Activated CD4-positive, alpha-beta T cell treated with anti-CD3 and anti-CD28 coated beads, Interleukin-2, amount 10 ng/mL, durations not matched to agents 24 days and 14 days (primary cell): ENCODE measurements at regions of chr5 and their contacts with region 1.

Region 1: DNA sequence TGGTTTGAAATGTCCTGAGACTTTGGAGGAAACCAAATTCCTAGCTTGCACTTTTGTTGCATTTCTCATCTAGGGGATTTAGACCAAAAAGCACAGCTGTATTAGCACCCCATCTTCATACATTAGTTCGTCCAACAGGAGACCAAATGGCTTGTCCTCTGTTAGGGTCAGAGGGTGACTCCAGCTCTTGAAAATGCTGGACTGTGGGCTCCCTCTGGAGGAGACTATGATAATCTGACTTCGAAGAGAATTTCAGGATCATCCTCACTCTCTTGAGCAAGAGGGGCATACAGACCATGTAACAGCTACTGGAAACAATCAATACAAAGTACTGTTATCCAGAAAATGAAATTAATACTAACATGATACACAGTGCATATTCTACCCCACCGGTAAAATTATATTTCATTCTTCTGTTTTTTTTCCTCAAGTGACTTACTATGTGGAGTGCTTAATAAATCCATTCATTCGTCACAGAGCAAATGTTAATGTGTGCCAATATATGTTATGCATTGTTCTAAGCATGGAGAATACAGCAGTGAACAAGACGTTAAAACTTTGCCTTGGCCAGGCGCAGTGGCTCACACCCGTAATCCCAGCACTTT is 63.7 kb upstream of the PPP2CA start:
- DNase-seq: peak; percentile 79
- H3K4me3 Mint-ChIP-seq: no peak overlapping the region
- H3K27ac Mint-ChIP-seq: no peak overlapping the region
- H3K4me1 Mint-ChIP-seq: peaks cover 4% of the 10 kb centered on the region
- H3K27me3 Mint-ChIP-seq: peaks cover 27% of the 10 kb centered on the region

Region 2: GRCh38 chr5:133794781-133795415 is 494.7 kb before region 1 on chr5:
- intact Hi-C with region 1: no loop called
- DNase-seq: no peak
- H3K4me3 Mint-ChIP-seq: no peak overlapping the region
- H3K27ac Mint-ChIP-seq: no peak overlapping the region
- H3K4me1 Mint-ChIP-seq: no peaks in the 10 kb centered on the region
- H3K27me3 Mint-ChIP-seq: peaks cover 6% of the 10 kb centered on the region

Region 3: GRCh38 chr5:134184155-134185135 is 105.2 kb before region 1 on chr5:
- intact Hi-C with region 1: loop called (anchors 1 kb)
- DNase-seq: peak; percentile 94
- H3K4me3 Mint-ChIP-seq: no peak overlapping the region
- H3K27ac Mint-ChIP-seq: no peak overlapping the region
- H3K4me1 Mint-ChIP-seq: no peaks in the 10 kb centered on the region
- H3K27me3 Mint-ChIP-seq: peaks cover 4% of the 10 kb centered on the region

Region 4: DNA sequence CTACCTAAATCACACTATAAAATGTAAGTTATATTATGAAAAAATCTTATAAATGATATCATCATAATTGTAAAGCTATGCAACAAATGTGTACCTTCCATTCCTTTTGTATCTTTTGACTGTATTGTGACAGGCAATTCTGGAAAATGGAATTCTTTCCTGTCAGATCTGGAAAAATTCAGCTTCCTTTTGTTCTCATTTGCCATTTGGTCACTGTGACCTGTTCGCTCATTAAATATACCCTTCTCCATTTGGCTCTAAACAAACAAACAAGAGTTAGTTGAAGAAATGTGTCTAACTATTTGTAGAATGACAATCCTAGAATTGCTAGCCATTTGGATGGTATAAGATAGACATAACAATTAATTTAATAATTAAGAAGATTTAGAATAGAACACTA is 14.7 kb after region 1 on chr5:
- intact Hi-C with region 1: no loop called
- DNase-seq: no peak
- H3K4me3 Mint-ChIP-seq: no peak overlapping the region
- H3K27ac Mint-ChIP-seq: no peak overlapping the region
- H3K4me1 Mint-ChIP-seq: no peaks in the 10 kb centered on the region
- H3K27me3 Mint-ChIP-seq: peaks cover 6% of the 10 kb centered on the region